ENCODE measurements at regions of chr2 and their contacts with region 1.

Region 1: DNA sequence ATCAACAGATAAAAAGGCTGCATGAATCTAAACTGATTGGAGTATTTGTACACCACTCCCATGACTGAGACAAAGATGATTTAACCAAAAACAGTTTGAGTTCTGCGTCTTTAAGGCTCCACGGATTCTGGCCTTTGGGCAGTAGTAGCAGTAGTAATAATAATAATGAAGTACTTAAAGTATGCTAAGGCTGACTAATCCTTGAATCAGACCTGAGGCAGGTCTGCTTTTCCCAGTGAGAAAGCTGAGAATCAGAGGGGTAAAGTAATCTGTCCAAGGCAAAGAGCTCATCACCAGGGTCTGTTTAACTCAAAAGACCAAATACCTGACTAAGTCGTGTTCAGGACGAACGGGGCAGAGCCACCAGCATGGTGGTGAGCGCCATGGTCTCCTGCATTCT is 61.4 kb downstream of the ID2 start:
- DNase-seq: no peak
- H3K4me3 ChIP-seq: no peak overlapping the region
- H3K27ac ChIP-seq: no peak overlapping the region
- H3K4me1 ChIP-seq: no peaks in the 10 kb centered on the region
- CTCF ChIP-seq: no peak

Region 2: DNA sequence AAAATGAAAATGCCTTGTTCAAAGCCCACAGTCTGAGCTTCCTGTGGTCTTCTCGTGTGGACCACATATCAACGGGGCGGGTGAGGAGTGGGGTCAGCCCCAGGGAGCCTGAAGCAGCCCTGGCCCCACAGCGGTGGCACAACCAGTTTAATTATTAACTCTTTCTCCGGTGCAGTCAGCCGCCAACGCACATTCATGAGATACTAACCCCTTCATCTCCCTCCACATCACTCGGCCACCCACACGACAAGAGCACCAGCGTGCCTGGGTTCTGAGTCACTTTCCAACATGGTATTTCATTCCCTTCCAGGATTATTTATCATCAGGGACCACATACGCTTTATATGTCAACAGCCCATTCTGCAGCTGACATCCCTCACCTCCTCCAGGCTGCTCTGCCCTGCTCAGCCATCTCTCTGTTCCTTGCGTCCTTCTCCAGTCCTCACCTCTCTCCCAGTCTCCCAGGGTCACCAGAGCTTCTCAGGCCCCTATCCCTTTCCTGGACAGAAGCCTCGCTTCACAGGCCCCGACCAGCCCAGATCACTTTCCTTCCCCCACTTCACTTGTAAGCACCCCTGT is 109.4 kb before region 1 on chr2:
- CTCF ChIA-PET with region 1: no interaction called
- POLR2A ChIA-PET with region 1: no interaction called
- intact Hi-C with region 1: no loop called
- DNase-seq: no peak
- H3K4me3 ChIP-seq: no peak overlapping the region
- H3K27ac ChIP-seq: no peak overlapping the region
- H3K4me1 ChIP-seq: peaks cover 47% of the 10 kb centered on the region
- CTCF ChIP-seq: no peak

Region 3: GRCh38 chr2:8729939-8730338 is 13.3 kb before region 1 on chr2:
- CTCF ChIA-PET with region 1: no interaction called
- POLR2A ChIA-PET with region 1: interaction called, 12 read pairs
- intact Hi-C with region 1: no loop called
- DNase-seq: no peak
- H3K4me3 ChIP-seq: no peak overlapping the region
- H3K27ac ChIP-seq: no peak overlapping the region
- H3K4me1 ChIP-seq: no peaks in the 10 kb centered on the region
- CTCF ChIP-seq: no peak